Activated CD8-positive, alpha-beta T cell treated with anti-CD3 and anti-CD28 coated beads for 36 hours (primary cell): ENCODE measurements at regions of chr1 and their contacts with region 1.

Region 1: DNA sequence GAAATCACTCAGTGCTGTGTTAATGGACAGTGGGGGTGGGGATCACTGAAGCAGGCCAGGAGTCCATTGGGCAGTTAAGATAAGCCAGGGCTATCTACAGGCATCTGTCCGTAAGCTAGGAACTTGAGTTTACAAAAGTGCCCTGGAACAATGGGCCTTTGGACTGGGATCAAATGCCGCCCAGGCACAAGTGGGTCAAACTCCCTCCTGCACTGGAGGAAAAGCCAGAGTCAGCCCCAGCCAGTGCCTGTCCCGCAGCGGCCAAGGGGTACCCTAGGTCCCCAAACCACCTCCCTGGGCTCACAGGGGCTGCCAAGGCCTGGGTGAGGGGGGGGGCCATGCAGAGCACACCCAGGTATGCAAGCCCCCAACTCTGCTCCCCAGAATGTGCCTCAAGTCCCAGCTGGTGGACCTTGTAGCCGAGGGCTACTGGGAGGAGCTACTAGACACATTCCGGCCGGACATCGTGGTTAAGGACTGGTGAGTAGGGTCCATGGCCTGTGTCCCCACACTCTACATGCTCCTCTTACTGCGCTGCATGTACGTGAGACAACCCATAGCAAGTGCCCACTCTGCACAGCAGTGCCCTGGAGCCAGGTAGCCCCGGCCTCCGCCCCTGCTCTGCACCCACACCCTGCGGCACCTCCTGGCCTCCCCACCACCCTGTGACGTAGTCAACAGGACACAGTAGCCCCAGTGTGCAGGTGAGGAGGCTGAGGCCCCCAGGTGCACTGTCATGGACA is 7.7 kb downstream of the FBXO6 start:
- DNase-seq: no peak
- ATAC-seq: no peak
- H3K4me3 Mint-ChIP-seq: no peak overlapping the region
- H3K27ac Mint-ChIP-seq: no peak overlapping the region
- H3K4me1 Mint-ChIP-seq: no peaks in the 10 kb centered on the region
- H3K27me3 Mint-ChIP-seq: no peaks in the 10 kb centered on the region
- CTCF ChIP-seq: no peak

Region 2: DNA sequence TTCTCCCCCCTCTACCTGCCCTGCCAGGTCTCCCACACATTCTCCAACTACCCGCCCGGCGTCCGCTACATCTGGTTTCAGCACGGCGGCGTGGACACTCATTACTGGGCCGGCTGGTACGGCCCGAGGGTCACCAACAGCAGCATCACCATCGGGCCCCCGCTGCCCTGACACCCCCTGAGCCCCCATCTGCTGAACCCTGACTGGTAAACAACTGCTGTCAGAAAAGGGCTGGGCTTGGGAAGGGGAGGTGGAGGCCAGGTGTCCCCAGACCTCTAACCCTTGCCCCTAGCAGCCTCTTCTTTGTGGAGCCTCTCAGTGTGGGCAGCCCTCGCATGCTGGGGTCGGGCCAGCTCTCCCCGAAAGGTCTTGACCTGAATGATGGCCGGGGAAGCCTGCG is 10.6 kb before region 1 on chr1:
- CTCF ChIA-PET with region 1: interaction called, 5 read pairs
- POLR2A ChIA-PET with region 1: interaction called, 14 read pairs
- intact Hi-C with region 1: no loop called
- DNase-seq: no peak
- ATAC-seq: no peak
- H3K4me3 Mint-ChIP-seq: no peak overlapping the region
- H3K27ac Mint-ChIP-seq: no peak overlapping the region
- H3K4me1 Mint-ChIP-seq: peaks cover 3% of the 10 kb centered on the region
- H3K27me3 Mint-ChIP-seq: no peaks in the 10 kb centered on the region
- CTCF ChIP-seq: no peak

Region 3: GRCh38 chr1:11691302-11691914 is 19.7 kb after region 1 on chr1 and contains the start of gene DRAXIN:
- CTCF ChIA-PET with region 1: no interaction called
- POLR2A ChIA-PET with region 1: no interaction called
- intact Hi-C with region 1: no loop called
- DNase-seq: no peak
- ATAC-seq: no peak
- H3K4me3 Mint-ChIP-seq: peak within 1 kb of the TSS; percentile 53
- H3K27ac Mint-ChIP-seq: no peak within 1 kb of the TSS
- H3K4me1 Mint-ChIP-seq: peaks cover 22% of the 10 kb centered on the region
- H3K27me3 Mint-ChIP-seq: peaks cover 36% of the 10 kb centered on the region
- CTCF ChIP-seq: no peak
- total RNA-seq, gene DRAXIN: 0.18 to 0.20 TPM